Right lobe of liver (tissue), 6 donors: ENCODE measurements at regions of chr2 and their contacts with region 1.

Region 1: DNA sequence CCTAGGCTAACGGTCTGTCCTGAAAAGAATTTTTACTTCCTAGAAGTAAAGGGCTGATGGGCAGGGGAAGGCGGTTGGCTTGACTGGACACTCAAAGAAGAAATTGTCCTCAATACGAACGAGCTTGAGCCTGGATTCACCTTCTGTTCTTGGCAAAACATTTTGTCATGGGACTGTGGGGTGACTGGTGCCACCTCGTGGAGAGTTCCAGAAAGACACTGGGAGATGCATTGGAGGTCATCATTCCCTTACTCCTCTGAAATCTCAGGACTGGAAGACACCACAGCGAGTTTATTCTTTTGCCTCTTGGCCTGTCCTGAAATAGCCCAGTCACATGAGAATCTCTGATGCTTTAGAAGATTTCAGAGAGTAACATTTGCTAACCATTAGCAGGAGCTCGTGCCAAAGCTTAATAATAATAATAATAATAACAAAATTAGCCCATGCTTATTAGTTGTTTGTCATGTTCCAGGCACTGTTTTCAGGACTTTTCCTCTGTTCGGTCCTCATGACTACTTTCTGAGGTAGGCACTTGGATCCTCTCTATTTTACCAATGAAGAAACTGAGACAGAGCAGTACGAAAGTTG is 44.5 kb downstream of the TMEM182 start:
- DNase-seq: peak; percentile 49 to 81 (median 66)
- ATAC-seq: peak; percentile 71 to 80 (median 76)
- H3K4me3 ChIP-seq: no peak overlapping the region
- H3K27ac ChIP-seq: no peak overlapping the region
- H3K4me1 ChIP-seq: peaks cover 0 to 20% (median 10%) of the 10 kb centered on the region in 4 donors
- H3K27me3 ChIP-seq: no peaks in the 10 kb centered on the region
- CTCF ChIP-seq: peak; percentile 82 to 87 (median 84)
- POLR2A ChIP-seq: no peak

Region 2: GRCh38 chr2:102698369-102699111 is 107.8 kb before region 1 on chr2:
- intact Hi-C with region 1: no loop called
- DNase-seq: peak in 1 of 3 donors; percentile 33
- ATAC-seq: peak in 2 of 4 donors; percentile 18 to 31
- H3K4me3 ChIP-seq: no peak overlapping the region
- H3K27ac ChIP-seq: no peak overlapping the region
- H3K4me1 ChIP-seq: no peaks in the 10 kb centered on the region
- H3K27me3 ChIP-seq: no peaks in the 10 kb centered on the region
- CTCF ChIP-seq: no peak
- POLR2A ChIP-seq: no peak

Region 3: GRCh38 chr2:102753563-102754159 is 52.7 kb before region 1 on chr2:
- intact Hi-C with region 1: loop called in 1 of 2 experiments (anchors 10 kb)
- DNase-seq: peak in 1 of 3 donors; percentile 50
- ATAC-seq: peak; percentile 78 to 88 (median 84)
- H3K4me3 ChIP-seq: no peak overlapping the region
- H3K27ac ChIP-seq: no peak overlapping the region
- H3K4me1 ChIP-seq: peaks cover 0 to 21% (median 6%) of the 10 kb centered on the region in 4 donors
- H3K27me3 ChIP-seq: no peaks in the 10 kb centered on the region
- CTCF ChIP-seq: peak; percentile 78 to 82 (median 82)
- POLR2A ChIP-seq: no peak